Activated CD4-positive, alpha-beta T cell treated with anti-CD3 and anti-CD28 coated beads for 36 hours (primary cell): ENCODE measurements at regions of chr14 and their contacts with region 1.

Region 1: DNA sequence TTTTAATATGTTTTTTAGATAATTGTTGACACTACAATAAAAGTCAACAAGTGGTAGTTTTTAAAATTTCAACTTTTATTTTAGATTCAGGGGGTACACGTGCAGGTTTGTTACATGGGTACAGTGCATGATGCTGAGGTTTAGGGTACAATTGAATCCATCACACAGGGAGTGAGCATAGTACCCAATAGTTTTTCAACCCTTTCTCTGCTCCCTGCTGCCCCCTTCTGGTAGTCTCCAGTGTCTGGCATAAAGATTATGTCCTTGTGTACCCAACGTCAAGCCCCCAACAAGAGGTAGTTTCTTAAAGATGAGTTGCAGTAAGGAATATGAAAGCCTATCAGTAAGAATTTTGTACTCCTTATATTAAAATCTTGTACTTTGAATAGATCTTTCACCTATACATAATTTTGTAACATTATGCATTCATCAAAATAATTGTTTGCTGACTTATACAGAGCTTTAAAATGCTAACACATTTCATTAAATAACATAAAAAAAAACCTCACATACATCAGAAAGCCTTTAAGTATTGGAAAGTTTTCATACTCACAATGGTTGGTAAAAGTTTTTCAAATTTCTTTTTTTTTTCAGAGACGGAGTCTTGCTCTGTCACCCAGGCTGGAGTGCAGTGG is 5.4 kb upstream of the RALGAPA1 start:
- DNase-seq: peak; percentile 90
- ATAC-seq: peak; percentile 89
- H3K4me3 Mint-ChIP-seq: no peak overlapping the region
- H3K27ac Mint-ChIP-seq: no peak overlapping the region
- H3K4me1 Mint-ChIP-seq: no peaks in the 10 kb centered on the region
- H3K27me3 Mint-ChIP-seq: no peaks in the 10 kb centered on the region

Region 2: DNA sequence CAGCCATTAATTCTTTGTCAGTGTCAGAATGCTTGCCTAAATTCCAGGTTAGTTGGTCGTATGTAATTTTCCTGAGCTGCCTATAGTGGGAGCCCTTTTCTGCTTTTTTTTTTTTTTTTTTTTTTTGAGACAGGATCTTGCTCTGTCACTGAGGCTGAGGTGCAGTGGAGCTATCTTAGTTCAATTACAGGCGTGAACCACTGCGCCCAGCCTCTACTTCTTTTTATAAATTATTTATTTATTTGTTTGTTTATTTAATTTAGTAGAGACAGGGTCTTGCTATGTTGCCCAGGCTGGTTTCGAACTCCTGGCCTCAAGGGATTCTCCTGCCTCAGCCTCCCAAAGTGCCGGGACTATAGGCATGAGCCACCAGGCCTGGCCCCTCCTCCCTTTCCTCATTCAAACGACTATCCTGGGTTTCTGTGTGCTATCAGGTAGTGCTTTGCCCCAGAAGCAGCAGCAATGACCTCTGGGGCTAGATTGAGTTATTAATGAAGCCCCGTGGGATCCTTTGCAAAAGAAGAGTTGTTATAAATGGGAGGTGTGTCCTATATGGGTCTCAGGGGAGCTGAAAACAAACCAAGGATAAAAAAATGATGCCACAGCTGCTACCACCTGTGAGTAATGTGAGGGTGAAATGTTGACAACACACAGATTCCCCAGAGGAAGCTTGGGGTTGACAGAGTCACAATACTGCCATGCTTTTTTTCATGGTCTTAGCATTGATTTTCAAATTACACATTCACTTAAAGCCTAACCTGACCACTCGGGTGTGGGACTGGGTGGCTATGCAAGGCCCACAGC is 375.4 kb before region 1 on chr14:
- CTCF ChIA-PET with region 1: interaction called, 5 read pairs
- POLR2A ChIA-PET with region 1: no interaction called
- intact Hi-C with region 1: loop called (anchors 1 to 5 kb)
- DNase-seq: no peak
- ATAC-seq: peak; percentile 49
- H3K4me3 Mint-ChIP-seq: no peak overlapping the region
- H3K27ac Mint-ChIP-seq: no peak overlapping the region
- H3K4me1 Mint-ChIP-seq: peaks cover 7% of the 10 kb centered on the region
- H3K27me3 Mint-ChIP-seq: no peaks in the 10 kb centered on the region

Region 3: GRCh38 chr14:35666429-35667043 is 148.0 kb before region 1 on chr14:
- CTCF ChIA-PET with region 1: no interaction called
- POLR2A ChIA-PET with region 1: no interaction called
- intact Hi-C with region 1: no loop called
- DNase-seq: no peak
- ATAC-seq: no peak
- H3K4me3 Mint-ChIP-seq: no peak overlapping the region
- H3K27ac Mint-ChIP-seq: no peak overlapping the region
- H3K4me1 Mint-ChIP-seq: no peaks in the 10 kb centered on the region
- H3K27me3 Mint-ChIP-seq: no peaks in the 10 kb centered on the region

Region 4: GRCh38 chr14:35963209-35963608 is 148.7 kb after region 1 on chr14:
- CTCF ChIA-PET with region 1: no interaction called
- POLR2A ChIA-PET with region 1: no interaction called
- intact Hi-C with region 1: no loop called
- DNase-seq: no peak
- ATAC-seq: no peak
- H3K4me3 Mint-ChIP-seq: no peak overlapping the region
- H3K27ac Mint-ChIP-seq: no peak overlapping the region
- H3K4me1 Mint-ChIP-seq: no peaks in the 10 kb centered on the region
- H3K27me3 Mint-ChIP-seq: peaks cover 2% of the 10 kb centered on the region